ENCODE measurements at regions of chr6 and their contacts with region 1.

Region 1: DNA sequence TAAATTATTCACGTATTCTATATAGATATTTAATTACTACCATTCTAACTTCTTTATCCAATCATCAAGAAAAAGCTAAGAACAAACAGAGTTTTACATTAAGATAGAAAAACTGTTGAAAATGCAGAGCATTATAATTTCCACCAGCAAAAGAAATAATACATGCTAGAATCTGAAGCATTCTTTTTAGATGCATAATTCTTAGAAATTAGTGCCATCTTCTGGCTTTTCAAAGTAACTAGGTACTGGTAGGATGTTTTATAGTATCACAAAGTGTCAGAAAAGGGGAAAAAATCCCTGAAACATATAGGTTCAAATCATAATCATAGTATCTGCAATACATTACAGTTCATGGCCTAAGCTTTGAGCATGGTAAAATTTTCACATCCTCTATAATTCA is 178.9 kb downstream of the PHF3 start:
- DNase-seq: peak; percentile 30
- ATAC-seq: peak; percentile 33
- H3K4me3 ChIP-seq: no peak overlapping the region
- H3K27ac ChIP-seq: no peak overlapping the region
- H3K4me1 ChIP-seq: no peaks in the 10 kb centered on the region
- H3K27me3 ChIP-seq: no peaks in the 10 kb centered on the region
- CTCF ChIP-seq: peak; percentile 36; the same call in 1 of the 2 replicates

Region 2: GRCh38 chr6:63403725-63404124 is 410.7 kb before region 1 on chr6:
- CTCF ChIA-PET with region 1: no interaction called
- POLR2A ChIA-PET with region 1: no interaction called
- intact Hi-C with region 1: no loop called
- DNase-seq: no peak
- ATAC-seq: no peak
- H3K4me3 ChIP-seq: no peak overlapping the region
- H3K27ac ChIP-seq: no peak overlapping the region
- H3K4me1 ChIP-seq: no peaks in the 10 kb centered on the region
- H3K27me3 ChIP-seq: no peaks in the 10 kb centered on the region
- CTCF ChIP-seq: no peak

Region 3: GRCh38 chr6:63486196-63486595 is 328.3 kb before region 1 on chr6:
- CTCF ChIA-PET with region 1: no interaction called
- POLR2A ChIA-PET with region 1: interaction called, 10 read pairs
- intact Hi-C with region 1: no loop called
- DNase-seq: no peak
- ATAC-seq: no peak
- H3K4me3 ChIP-seq: no peak overlapping the region
- H3K27ac ChIP-seq: no peak overlapping the region
- H3K4me1 ChIP-seq: no peaks in the 10 kb centered on the region
- H3K27me3 ChIP-seq: no peaks in the 10 kb centered on the region
- CTCF ChIP-seq: no peak

Measured in PC-3 (cell line).